ENCODE measurements at regions of chr2 and their contacts with region 1.

Region 1: GRCh38 chr2:97663965-97664635 is at the start of gene ACTR1B:
- DNase-seq: peak; percentile 99
- ATAC-seq: peak; percentile 82
- H3K4me3 Mint-ChIP-seq: peak within 1 kb of the TSS; percentile 91
- H3K27ac Mint-ChIP-seq: peak within 1 kb of the TSS; percentile 99
- H3K4me1 Mint-ChIP-seq: peaks cover 27% of the 10 kb centered on the region
- H3K27me3 Mint-ChIP-seq: no peaks in the 10 kb centered on the region
- CTCF ChIP-seq: peak; percentile 65
- total RNA-seq, gene ACTR1B: 143 to 150 TPM

Region 2: DNA sequence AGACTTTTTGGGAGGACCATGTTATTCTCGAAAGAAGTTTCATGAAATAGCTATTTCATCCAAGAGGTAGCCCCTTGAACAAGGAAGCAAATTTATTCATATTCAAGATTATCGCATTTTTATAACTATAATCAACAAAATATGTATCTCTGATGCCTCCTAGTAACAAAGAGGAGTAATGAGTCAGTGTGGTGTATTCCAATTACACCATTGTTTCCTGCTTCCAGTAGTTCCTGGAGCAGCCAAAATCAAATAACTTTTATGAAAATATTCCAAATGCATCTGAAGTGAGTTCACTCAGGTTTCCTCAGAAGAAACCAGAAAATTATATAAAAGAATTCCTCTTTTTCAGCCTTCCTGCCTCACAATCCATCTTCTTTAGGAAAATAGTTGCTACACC is 117.4 kb before region 1 on chr2:
- CTCF ChIA-PET with region 1: no interaction called
- POLR2A ChIA-PET with region 1: no interaction called
- intact Hi-C with region 1: no loop called
- DNase-seq: no peak
- ATAC-seq: no peak
- H3K4me3 Mint-ChIP-seq: no peak overlapping the region
- H3K27ac Mint-ChIP-seq: no peak overlapping the region
- H3K4me1 Mint-ChIP-seq: no peaks in the 10 kb centered on the region
- H3K27me3 Mint-ChIP-seq: no peaks in the 10 kb centered on the region
- CTCF ChIP-seq: no peak

Region 3: GRCh38 chr2:97645695-97646629 is 18.1 kb before region 1 on chr2 and contains the start of gene COX5B:
- CTCF ChIA-PET with region 1: interaction called, 68 read pairs
- POLR2A ChIA-PET with region 1: interaction called, 210 read pairs
- intact Hi-C with region 1: no loop called
- DNase-seq: peak; percentile 100
- ATAC-seq: peak; percentile 97
- H3K4me3 Mint-ChIP-seq: peak within 1 kb of the TSS; percentile 90
- H3K27ac Mint-ChIP-seq: peak within 1 kb of the TSS; percentile 98
- H3K4me1 Mint-ChIP-seq: peaks cover 15% of the 10 kb centered on the region
- H3K27me3 Mint-ChIP-seq: no peaks in the 10 kb centered on the region
- CTCF ChIP-seq: no peak
- total RNA-seq, gene COX5B: 233 to 238 TPM

Region 4: GRCh38 chr2:97651114-97651513 is 13.0 kb before region 1 on chr2:
- CTCF ChIA-PET with region 1: interaction called, 68 read pairs
- POLR2A ChIA-PET with region 1: interaction called, 210 read pairs
- intact Hi-C with region 1: no loop called
- DNase-seq: no peak
- ATAC-seq: no peak
- H3K4me3 Mint-ChIP-seq: no peak overlapping the region
- H3K27ac Mint-ChIP-seq: peak overlapping the region; percentile 54
- H3K4me1 Mint-ChIP-seq: peaks cover 23% of the 10 kb centered on the region
- H3K27me3 Mint-ChIP-seq: no peaks in the 10 kb centered on the region
- CTCF ChIP-seq: no peak

Region 5: DNA sequence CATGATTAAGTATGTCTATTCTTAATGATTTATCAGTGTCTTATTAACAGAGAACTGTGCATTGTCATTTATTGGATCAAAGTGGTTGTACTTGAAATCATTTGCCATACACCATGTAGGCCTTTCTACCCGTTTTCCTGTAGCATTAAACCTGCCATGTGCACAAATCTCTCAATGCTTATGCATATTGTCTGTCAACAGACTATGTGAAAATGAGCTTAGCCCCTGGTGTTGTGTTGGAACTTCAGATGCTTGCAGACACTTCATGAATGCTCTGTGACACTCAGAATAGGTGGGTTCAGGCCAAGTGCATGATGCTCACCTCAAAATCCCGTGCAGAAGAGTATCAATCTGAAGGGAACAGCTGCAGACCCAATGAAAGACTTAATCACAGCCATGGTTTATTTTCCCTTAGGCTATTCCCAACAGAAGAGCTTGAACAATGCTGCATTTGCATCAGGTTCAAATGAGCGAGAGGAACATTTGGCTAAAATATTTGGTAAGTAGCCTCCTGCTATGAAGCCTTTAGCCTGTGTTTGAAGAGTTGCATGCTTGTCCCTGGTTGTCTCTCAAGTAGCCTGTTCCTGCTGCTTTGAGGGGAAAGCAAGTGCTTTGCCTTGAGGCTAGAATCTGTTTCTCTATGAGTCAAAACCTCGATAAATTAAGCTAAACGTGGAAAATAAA is 11.5 kb after region 1 on chr2:
- CTCF ChIA-PET with region 1: interaction called, 27 read pairs
- POLR2A ChIA-PET with region 1: interaction called, 24 read pairs
- intact Hi-C with region 1: no loop called
- DNase-seq: no peak
- ATAC-seq: no peak
- H3K4me3 Mint-ChIP-seq: no peak overlapping the region
- H3K27ac Mint-ChIP-seq: no peak overlapping the region
- H3K4me1 Mint-ChIP-seq: peaks cover 31% of the 10 kb centered on the region
- H3K27me3 Mint-ChIP-seq: peaks cover 1% of the 10 kb centered on the region
- CTCF ChIP-seq: no peak

Region 6: DNA sequence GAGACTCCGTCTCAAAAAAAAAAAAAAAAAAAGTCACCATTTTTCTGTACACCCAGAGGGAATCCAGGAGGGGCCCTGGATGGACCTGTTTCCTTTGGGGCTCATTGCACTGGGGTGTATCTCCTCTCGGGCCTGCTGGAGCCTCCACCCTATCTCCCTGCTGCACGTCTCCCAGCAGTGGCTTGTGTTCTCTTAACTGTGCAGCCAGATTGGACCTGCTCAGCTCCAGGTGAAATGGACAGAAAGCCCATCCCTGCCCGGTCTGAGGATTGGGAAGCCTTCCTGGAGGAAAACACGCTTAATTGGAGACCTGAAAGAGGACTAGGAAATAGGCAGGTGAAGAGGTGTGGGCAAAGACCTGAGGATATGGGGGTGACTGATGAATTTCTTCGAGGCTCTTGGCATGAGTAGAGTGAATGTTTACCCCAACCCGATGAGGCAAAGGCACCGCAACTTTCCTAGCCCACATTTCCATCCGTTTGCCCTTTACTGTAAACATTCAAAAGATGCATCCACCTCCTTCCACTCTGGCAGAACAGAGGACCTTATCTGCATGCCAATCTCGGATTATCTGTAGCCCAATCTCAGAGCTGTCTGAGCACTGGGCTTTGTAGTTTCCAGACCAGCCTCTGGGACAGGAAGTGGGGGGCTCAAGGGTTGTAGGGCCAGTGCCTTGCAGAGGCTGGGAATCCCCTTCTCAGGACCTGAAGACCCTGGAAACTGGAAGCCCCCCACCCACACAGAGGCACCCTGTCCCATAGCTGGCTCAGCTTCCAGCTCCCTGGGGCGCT is 46.7 kb after region 1 on chr2:
- CTCF ChIA-PET with region 1: interaction called, 17 read pairs
- POLR2A ChIA-PET with region 1: interaction called, 19 read pairs
- intact Hi-C with region 1: no loop called
- DNase-seq: peak; percentile 65
- ATAC-seq: no peak
- H3K4me3 Mint-ChIP-seq: no peak overlapping the region
- H3K27ac Mint-ChIP-seq: peak overlapping the region; percentile 79
- H3K4me1 Mint-ChIP-seq: peaks cover 38% of the 10 kb centered on the region
- H3K27me3 Mint-ChIP-seq: no peaks in the 10 kb centered on the region
- CTCF ChIP-seq: no peak

Region 7: GRCh38 chr2:97718051-97718882 is 54.2 kb after region 1 on chr2:
- CTCF ChIA-PET with region 1: interaction called, 17 read pairs
- POLR2A ChIA-PET with region 1: interaction called, 19 read pairs
- intact Hi-C with region 1: no loop called
- DNase-seq: peak; percentile 91
- ATAC-seq: peak; percentile 67
- H3K4me3 Mint-ChIP-seq: peak overlapping the region; percentile 89
- H3K27ac Mint-ChIP-seq: peak overlapping the region; percentile 100
- H3K4me1 Mint-ChIP-seq: peaks cover 58% of the 10 kb centered on the region
- H3K27me3 Mint-ChIP-seq: no peaks in the 10 kb centered on the region
- CTCF ChIP-seq: no peak

Region 8: DNA sequence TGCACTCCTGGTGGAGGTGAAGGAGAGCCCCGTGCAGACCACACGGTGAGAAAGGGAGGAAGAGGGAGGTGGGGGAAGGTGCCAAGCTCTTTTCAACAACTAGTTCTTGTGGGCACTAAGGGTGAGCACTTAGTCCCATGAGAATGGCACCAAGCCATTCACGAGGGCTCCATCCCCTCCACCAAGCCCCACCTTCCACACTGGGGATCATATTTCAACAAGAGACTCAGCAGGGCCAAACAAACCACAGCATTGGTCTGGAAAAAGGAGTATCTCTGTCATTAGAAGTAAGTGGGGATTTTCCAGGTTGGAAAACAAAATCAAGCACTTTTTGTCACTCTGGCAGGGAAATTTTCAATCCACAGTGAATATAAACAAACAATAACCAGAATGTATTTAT is 87.7 kb after region 1 on chr2:
- CTCF ChIA-PET with region 1: interaction called, 11 read pairs
- POLR2A ChIA-PET with region 1: no interaction called
- intact Hi-C with region 1: no loop called
- DNase-seq: no peak
- ATAC-seq: no peak
- H3K4me3 Mint-ChIP-seq: no peak overlapping the region
- H3K27ac Mint-ChIP-seq: no peak overlapping the region
- H3K4me1 Mint-ChIP-seq: peaks cover 19% of the 10 kb centered on the region
- H3K27me3 Mint-ChIP-seq: no peaks in the 10 kb centered on the region
- CTCF ChIP-seq: no peak